Naive thymus-derived CD8-positive, alpha-beta T cell (primary cell): ENCODE measurements at regions of chr1 and their contacts with region 1.

Region 1: DNA sequence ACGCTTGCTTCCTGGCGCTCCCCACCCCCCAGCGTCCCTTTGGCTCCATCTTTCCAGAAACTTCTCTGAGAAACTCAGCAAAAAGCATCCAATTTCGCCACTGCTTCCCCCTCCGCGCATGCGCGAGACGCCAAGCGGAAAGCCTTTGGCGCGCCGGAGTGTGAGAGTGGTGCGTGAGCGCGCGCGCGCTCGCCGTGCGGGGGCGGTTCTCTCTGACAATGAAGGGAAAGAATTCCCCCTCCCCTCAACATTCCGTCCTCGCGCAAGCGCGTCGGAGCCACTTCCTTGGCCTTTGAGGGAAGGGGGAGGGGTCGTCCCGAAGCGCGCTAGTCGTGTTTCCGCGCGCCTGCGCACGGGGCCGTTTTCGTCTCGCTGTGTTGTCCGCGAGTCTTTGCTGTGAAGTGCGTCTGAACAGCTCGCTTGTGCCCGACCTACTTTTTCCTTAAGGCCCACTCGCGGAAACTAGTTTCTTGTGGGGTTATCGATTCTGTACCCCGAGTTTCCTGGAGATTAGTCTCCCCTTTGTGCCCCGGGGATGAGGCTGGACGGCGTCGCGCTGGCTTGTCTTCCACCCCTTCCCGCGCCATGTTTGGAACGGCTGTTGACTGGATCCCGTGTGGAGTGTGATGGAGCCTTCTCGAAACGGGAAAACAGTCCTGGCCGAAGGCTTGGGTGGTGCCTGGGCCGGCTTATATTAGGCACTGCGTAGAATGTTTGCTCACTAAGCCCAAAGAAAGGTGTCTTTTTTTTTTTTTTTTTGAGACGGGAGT is 11.6 kb upstream of the SPEN start:
- DNase-seq: peak; percentile 94 to 100 (median 98)
- ATAC-seq: peak; percentile 46 to 48
- H3K4me3 Mint-ChIP-seq: peak overlapping the region; percentile 84 to 98 (median 95)
- H3K27ac Mint-ChIP-seq: peak overlapping the region; percentile 95 to 99 (median 99)
- H3K4me1 Mint-ChIP-seq: peaks cover 4 to 46% (median 21%) of the 10 kb centered on the region in 4 donors
- H3K27me3 Mint-ChIP-seq: no peaks in the 10 kb centered on the region

Region 2: GRCh38 chr1:15803354-15803753 is 32.6 kb before region 1 on chr1:
- POLR2A ChIA-PET with region 1: no interaction called
- DNase-seq: peak in 3 of 10 donors; percentile 11 to 21 (median 13)
- ATAC-seq: peak in 1 of 2 donors; percentile 56
- H3K4me3 Mint-ChIP-seq: no peak overlapping the region
- H3K27ac Mint-ChIP-seq: no peak overlapping the region
- H3K4me1 Mint-ChIP-seq: peaks cover 0 to 3% (median 0%) of the 10 kb centered on the region in 4 donors
- H3K27me3 Mint-ChIP-seq: peaks cover 1 to 17% (median 14%) of the 10 kb centered on the region in 5 donors

Region 3: DNA sequence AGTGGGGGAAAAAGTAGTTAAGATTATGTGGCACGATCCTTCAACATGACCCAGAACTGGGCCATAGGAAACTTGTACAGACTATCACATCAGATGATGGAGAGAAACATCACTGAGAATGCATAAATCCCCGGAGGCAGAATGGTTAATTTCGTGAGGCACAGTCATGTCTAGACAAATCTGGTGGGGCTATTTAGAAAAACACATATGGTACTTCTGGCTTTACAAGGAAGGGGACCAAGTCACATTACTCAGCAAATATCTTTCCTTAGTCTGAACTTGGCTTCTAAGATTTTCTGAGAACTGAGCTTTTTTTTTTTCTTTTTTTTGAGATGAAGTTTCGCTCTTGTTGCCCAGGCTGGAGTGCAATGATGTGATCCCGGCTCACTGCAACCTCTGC is 19.3 kb before region 1 on chr1:
- POLR2A ChIA-PET with region 1: interaction called, 42 read pairs
- DNase-seq: no peak
- ATAC-seq: no peak
- H3K4me3 Mint-ChIP-seq: no peak overlapping the region
- H3K27ac Mint-ChIP-seq: peak overlapping the region in 1 of 10 donors; percentile 66
- H3K4me1 Mint-ChIP-seq: peaks cover 0 to 5% (median 4%) of the 10 kb centered on the region in 4 donors
- H3K27me3 Mint-ChIP-seq: no peaks in the 10 kb centered on the region

Region 4: GRCh38 chr1:15825800-15826199 is 10.1 kb before region 1 on chr1:
- POLR2A ChIA-PET with region 1: interaction called, 16 read pairs
- DNase-seq: no peak
- ATAC-seq: no peak
- H3K4me3 Mint-ChIP-seq: no peak overlapping the region
- H3K27ac Mint-ChIP-seq: no peak overlapping the region
- H3K4me1 Mint-ChIP-seq: peaks cover 10 to 43% (median 13%) of the 10 kb centered on the region in 4 donors
- H3K27me3 Mint-ChIP-seq: no peaks in the 10 kb centered on the region

Region 5: GRCh38 chr1:15847100-15847892 is 11.4 kb after region 1 on chr1 and contains the start of gene SPEN:
- POLR2A ChIA-PET with region 1: interaction called, 392 read pairs
- DNase-seq: peak; percentile 91 to 99 (median 98)
- ATAC-seq: peak; percentile 82 to 83
- H3K4me3 Mint-ChIP-seq: peak within 1 kb of the TSS; percentile 96 to 99 (median 98)
- H3K27ac Mint-ChIP-seq: peak within 1 kb of the TSS; percentile 96 to 98 (median 98)
- H3K4me1 Mint-ChIP-seq: peaks cover 13 to 63% (median 38%) of the 10 kb centered on the region in 4 donors
- H3K27me3 Mint-ChIP-seq: no peaks in the 10 kb centered on the region
- polyA plus RNA-seq, gene SPEN: 4.0 to 38.0 (median 8.1) TPM

Region 6: DNA sequence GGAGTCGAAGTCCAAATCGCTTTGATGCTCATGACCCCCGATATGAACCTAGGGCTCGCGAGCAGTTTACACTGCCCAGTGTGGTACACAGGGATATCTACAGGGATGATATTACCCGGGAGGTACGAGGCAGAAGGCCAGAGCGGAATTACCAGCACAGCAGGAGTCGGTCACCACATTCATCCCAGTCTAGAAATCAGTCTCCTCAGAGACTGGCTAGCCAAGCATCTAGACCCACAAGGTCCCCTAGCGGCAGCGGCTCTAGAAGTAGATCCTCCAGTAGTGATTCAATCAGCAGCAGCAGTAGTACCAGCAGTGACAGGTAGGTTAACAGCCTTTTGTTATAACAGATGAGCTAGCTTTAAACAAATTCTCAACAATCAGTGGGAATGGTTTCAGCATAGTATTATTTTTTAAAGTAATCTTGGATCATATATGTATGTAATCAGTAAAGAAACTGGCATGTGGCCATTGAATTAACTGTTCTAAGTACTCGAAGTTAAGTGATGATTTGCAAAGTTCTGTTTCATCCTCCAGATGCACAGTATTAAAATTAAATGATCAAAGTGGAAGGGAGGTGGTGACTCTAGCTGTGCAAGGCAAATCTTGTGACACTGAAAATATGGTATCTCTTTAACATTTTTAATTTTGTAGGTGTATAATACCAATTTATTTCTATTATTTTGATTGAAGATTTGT is 40.6 kb after region 1 on chr1:
- POLR2A ChIA-PET with region 1: no interaction called
- DNase-seq: no peak
- ATAC-seq: peak; percentile 42 to 53
- H3K4me3 Mint-ChIP-seq: no peak overlapping the region
- H3K27ac Mint-ChIP-seq: peak overlapping the region in 6 of 10 donors; percentile 6 to 79 (median 35)
- H3K4me1 Mint-ChIP-seq: peaks cover 28 to 74% (median 61%) of the 10 kb centered on the region in 4 donors
- H3K27me3 Mint-ChIP-seq: no peaks in the 10 kb centered on the region

Region 7: GRCh38 chr1:15895233-15895632 is 59.3 kb after region 1 on chr1:
- POLR2A ChIA-PET with region 1: interaction called, 11 read pairs
- DNase-seq: no peak
- ATAC-seq: no peak
- H3K4me3 Mint-ChIP-seq: peak overlapping the region in 1 of 10 donors; percentile 26
- H3K27ac Mint-ChIP-seq: peak overlapping the region in 4 of 10 donors; percentile 2 to 59 (median 38)
- H3K4me1 Mint-ChIP-seq: peaks cover 21 to 47% (median 39%) of the 10 kb centered on the region in 4 donors
- H3K27me3 Mint-ChIP-seq: no peaks in the 10 kb centered on the region

Region 8: DNA sequence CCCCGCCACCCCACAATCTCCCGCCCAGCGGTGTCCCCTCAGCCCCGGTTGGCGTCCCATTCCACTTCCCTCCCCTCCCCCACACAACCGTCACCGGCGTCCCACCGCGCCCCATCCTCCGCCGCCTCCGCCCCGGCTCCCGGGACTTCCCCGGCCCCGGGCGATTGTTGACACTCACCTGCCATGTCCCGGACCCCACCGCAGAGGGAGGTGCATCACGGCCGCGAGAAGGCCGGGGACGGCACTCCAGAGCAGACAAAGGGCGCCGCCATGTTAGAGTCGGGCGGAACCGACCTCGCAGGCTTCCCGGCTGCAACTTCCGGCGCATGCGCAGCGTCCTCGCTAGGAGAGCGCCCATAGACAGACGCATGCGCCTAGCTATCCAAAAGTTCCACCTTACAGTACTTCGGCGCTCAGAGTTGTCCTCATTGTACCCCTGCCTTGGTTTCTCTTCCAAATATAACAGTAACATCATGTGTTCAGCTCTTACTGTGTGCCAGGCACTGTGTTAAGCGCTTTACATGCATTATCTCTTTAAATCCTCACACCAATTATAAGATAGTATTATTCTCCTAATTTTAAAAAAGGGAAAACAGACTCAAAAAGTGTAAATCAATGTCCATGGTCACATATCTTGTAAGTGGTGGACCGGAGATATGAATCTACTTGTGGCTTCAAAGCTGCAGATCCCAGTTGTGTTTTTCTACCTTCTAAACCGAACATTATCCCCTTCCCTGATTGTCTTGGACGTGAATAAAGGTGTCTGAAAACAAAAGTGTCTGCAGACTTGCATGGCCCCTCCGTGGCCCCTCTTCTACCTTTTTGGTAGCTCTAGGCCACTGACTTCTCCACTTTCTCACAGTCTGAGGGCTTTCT is 140.1 kb after region 1 on chr1 and contains the start of gene ZBTB17:
- POLR2A ChIA-PET with region 1: interaction called, 16 read pairs
- DNase-seq: peak; percentile 92 to 97 (median 96)
- ATAC-seq: peak; percentile 90 to 92
- H3K4me3 Mint-ChIP-seq: peak within 1 kb of the TSS; percentile 87 to 96 (median 90)
- H3K27ac Mint-ChIP-seq: peak within 1 kb of the TSS; percentile 89 to 96 (median 94)
- H3K4me1 Mint-ChIP-seq: peaks cover 22 to 43% (median 39%) of the 10 kb centered on the region in 4 donors
- H3K27me3 Mint-ChIP-seq: peaks cover 0 to 2% (median 0%) of the 10 kb centered on the region in 5 donors
- polyA plus RNA-seq, gene ZBTB17: 10.2 to 23.3 (median 11.1) TPM

Region 9: GRCh38 chr1:16371725-16372124 is 535.8 kb after region 1 on chr1:
- POLR2A ChIA-PET with region 1: no interaction called
- DNase-seq: no peak
- ATAC-seq: no peak
- H3K4me3 Mint-ChIP-seq: peak overlapping the region; percentile 20 to 78 (median 44)
- H3K27ac Mint-ChIP-seq: peak overlapping the region in 8 of 10 donors; percentile 40 to 82 (median 49)
- H3K4me1 Mint-ChIP-seq: peaks cover 30 to 78% (median 71%) of the 10 kb centered on the region in 4 donors
- H3K27me3 Mint-ChIP-seq: no peaks in the 10 kb centered on the region